Activated CD4-positive, alpha-beta T cell treated with anti-CD3 and anti-CD28 coated beads, Interleukin-2, amount 10 ng/mL, durations not matched to agents 7 days and 5 days (primary cell): ENCODE measurements at regions of chr21 and their contacts with region 1.

Region 1: DNA sequence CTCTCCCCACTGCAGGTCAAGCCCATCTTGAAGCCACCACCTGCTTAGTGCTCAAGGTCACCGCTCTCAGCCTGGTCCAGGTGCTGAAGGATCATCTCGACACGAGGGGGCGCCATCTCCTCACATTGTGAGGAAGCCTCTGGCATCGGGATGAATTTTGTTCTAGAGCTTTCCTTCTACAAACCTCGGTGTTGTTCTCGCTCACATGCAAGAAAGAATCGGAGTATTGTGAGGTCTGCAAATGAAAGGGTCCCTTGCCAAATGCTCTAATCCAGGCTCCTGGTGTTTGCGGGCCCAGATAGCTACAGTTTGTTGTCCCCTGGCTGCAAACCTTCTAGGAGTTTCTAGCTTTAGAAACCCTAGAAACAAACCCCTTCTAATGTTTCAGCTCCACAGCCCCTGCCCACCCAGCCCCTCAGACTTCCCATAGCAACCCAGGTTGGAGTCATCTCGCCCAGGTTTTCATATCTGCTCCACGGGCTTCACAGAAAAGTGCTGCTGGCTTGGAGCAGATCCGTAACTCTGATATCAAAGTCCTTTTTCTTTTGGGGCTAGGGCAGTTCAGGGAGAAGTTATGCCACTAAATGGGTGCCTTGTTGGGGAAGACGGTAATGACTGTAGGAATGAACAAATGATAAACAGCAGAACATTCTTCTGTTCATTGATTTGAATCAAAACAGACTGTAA is 8.6 kb upstream of the ATP5PO start:
- DNase-seq: peak; percentile 93
- H3K4me3 Mint-ChIP-seq: no peak overlapping the region
- H3K27ac Mint-ChIP-seq: peak overlapping the region; percentile 31
- H3K4me1 Mint-ChIP-seq: peaks cover 15% of the 10 kb centered on the region
- H3K27me3 Mint-ChIP-seq: no peaks in the 10 kb centered on the region

Region 2: GRCh38 chr21:33817663-33818451 is 106.4 kb before region 1 on chr21:
- CTCF ChIA-PET with region 1: no interaction called
- POLR2A ChIA-PET with region 1: no interaction called
- DNase-seq: no peak
- H3K4me3 Mint-ChIP-seq: no peak overlapping the region
- H3K27ac Mint-ChIP-seq: no peak overlapping the region
- H3K4me1 Mint-ChIP-seq: no peaks in the 10 kb centered on the region
- H3K27me3 Mint-ChIP-seq: no peaks in the 10 kb centered on the region

Region 3: GRCh38 chr21:33947451-33948095 is 23.4 kb after region 1 on chr21:
- CTCF ChIA-PET with region 1: interaction called, 13 read pairs
- POLR2A ChIA-PET with region 1: no interaction called
- DNase-seq: peak; percentile 91
- H3K4me3 Mint-ChIP-seq: peak overlapping the region; percentile 62
- H3K27ac Mint-ChIP-seq: peak overlapping the region; percentile 99
- H3K4me1 Mint-ChIP-seq: peaks cover 78% of the 10 kb centered on the region
- H3K27me3 Mint-ChIP-seq: no peaks in the 10 kb centered on the region

Region 4: GRCh38 chr21:33976082-33977016 is 52.1 kb after region 1 on chr21:
- CTCF ChIA-PET with region 1: interaction called, 10 read pairs
- POLR2A ChIA-PET with region 1: no interaction called
- DNase-seq: peak; percentile 59
- H3K4me3 Mint-ChIP-seq: peak overlapping the region; percentile 55
- H3K27ac Mint-ChIP-seq: peak overlapping the region; percentile 94
- H3K4me1 Mint-ChIP-seq: peaks cover 72% of the 10 kb centered on the region
- H3K27me3 Mint-ChIP-seq: no peaks in the 10 kb centered on the region

Region 5: GRCh38 chr21:34129039-34129891 is 205.0 kb after region 1 on chr21:
- CTCF ChIA-PET with region 1: interaction called, 12 read pairs
- POLR2A ChIA-PET with region 1: no interaction called
- DNase-seq: peak; percentile 82
- H3K4me3 Mint-ChIP-seq: peak overlapping the region; percentile 53
- H3K27ac Mint-ChIP-seq: peak overlapping the region; percentile 89
- H3K4me1 Mint-ChIP-seq: peaks cover 81% of the 10 kb centered on the region
- H3K27me3 Mint-ChIP-seq: no peaks in the 10 kb centered on the region

Region 6: DNA sequence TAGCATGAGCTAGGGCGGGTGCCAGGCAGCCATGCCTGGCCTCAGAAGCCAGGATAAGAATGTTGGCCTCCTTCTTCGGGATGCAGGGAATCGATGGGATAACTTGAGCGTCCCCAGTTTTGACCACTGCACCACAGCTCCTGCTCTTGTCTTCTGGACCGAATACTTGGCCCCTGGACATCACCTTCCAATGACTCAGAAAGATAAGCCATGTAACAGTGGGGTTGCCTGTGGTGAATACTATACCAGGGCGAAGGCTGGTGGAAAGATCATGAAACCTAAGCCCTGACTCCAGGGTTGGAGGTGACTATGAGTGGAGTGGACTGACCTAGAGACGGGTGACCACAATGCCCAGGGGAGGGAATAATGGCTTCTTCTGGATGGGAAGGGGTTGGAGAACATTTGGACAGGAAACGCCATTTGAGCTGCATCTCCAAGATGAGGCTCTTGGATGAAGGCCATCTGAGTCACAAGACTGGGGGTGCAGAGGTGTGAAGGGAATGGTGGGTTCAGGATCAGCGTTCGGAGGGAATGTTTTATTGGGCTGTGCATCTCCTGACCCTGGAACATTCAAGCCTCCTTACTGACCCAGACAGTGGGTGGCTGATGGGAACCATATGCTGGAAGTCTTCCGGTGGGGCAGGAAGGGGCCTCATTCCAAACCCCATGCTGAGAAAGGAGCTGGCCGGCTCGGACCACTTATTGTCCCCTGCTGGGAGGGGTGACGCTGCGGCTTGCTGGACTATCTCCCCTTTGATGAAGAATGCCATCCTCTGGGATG is 421.1 kb after region 1 on chr21:
- CTCF ChIA-PET with region 1: interaction called, 34 read pairs
- POLR2A ChIA-PET with region 1: interaction called, 6 read pairs
- DNase-seq: no peak
- H3K4me3 Mint-ChIP-seq: no peak overlapping the region
- H3K27ac Mint-ChIP-seq: no peak overlapping the region
- H3K4me1 Mint-ChIP-seq: peaks cover 9% of the 10 kb centered on the region
- H3K27me3 Mint-ChIP-seq: no peaks in the 10 kb centered on the region

Region 7: GRCh38 chr21:34351786-34352241 is 427.6 kb after region 1 on chr21:
- CTCF ChIA-PET with region 1: interaction called, 34 read pairs
- POLR2A ChIA-PET with region 1: interaction called, 6 read pairs
- DNase-seq: peak; percentile 23
- H3K4me3 Mint-ChIP-seq: no peak overlapping the region
- H3K27ac Mint-ChIP-seq: no peak overlapping the region
- H3K4me1 Mint-ChIP-seq: peaks cover 11% of the 10 kb centered on the region
- H3K27me3 Mint-ChIP-seq: peaks cover 9% of the 10 kb centered on the region